ENCODE measurements at regions of chr17 and their contacts with region 1.

Region 1: DNA sequence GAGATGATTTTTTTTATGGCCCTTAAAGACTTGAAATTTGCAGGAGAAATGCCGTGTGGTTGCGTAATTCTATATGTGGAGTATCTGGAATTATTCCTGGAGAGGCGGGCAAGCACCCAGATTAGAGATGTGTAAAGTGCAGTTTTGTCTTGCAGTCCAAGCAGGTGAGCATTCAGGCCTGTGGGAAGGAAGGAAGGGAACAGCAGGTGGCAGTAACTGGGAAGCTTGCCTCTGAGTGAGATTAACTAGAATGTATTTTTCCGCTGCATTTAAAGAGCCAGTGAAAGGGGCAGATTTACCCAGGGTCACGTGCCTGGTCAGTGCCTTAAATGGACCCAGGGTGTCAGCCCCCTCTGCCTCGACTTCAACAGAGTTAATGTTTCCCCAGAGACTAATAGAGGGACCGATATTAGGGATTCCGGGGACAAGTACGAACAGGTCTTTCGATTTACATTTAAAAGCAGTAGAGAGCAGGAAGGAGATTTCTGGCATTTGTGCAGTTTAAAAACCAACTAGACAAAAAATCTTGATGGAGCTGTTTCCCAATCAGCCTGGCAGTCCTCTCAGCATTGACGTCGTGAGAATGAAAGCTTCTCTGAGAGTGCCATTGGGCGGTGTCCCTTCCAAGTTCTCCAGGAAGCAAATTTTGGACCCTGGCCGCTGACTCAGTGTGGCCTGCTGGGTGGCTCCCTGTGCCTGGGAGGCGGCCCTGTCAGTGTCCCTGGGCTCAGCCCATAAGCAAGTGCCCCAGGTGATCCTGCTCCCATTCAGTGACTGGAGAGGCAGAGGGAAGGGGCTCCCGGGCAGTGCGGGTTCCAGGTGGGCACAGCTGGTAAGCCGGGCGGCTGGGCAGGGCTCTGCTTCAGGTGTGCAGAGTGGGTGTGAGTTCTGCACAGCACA is 38.2 kb downstream of the KSR1 start:
- DNase-seq: no peak
- ATAC-seq: no peak; the same call in 2 of the 3 replicates
- H3K4me3 ChIP-seq: no peak overlapping the region
- H3K27ac ChIP-seq: peak overlapping the region; percentile 80; the same call in 1 of the 2 replicates
- H3K4me1 ChIP-seq: peaks cover 43% of the 10 kb centered on the region
- H3K27me3 ChIP-seq: no peaks in the 10 kb centered on the region
- CTCF ChIP-seq: peak in 1 of 3 experiments; percentile 24; a peak in 2 of 6 replicates
- EP300 ChIP-seq: no peak
- POLR2A ChIP-seq: no peak
- RAD21 ChIP-seq: no peak

Region 2: GRCh38 chr17:27466743-27467375 is 27.6 kb before region 1 on chr17:
- CTCF ChIA-PET with region 1: interaction called, 9 read pairs
- POLR2A ChIA-PET with region 1: interaction called, 11 read pairs
- RAD21 ChIA-PET with region 1: interaction called, 20 read pairs
- SMC1A ChIA-PET with region 1: interaction called, 139 read pairs
- in situ Hi-C with region 1: no loop called
- intact Hi-C with region 1: loop called (anchors 2 kb)
- DNase-seq: peak; percentile 87
- ATAC-seq: peak; percentile 79
- H3K4me3 ChIP-seq: peak overlapping the region; percentile 54
- H3K27ac ChIP-seq: peak overlapping the region; percentile 92
- H3K4me1 ChIP-seq: peaks cover 67% of the 10 kb centered on the region
- H3K27me3 ChIP-seq: no peaks in the 10 kb centered on the region
- CTCF ChIP-seq: 0 out of 6 replicates have a peak, but pooled peaks of 1 of the 3 experiments have one; percentile 4
- EP300 ChIP-seq: peak; percentile 26 to 90; a peak in 3 of 4 replicates
- POLR2A ChIP-seq: peak; percentile 47; the same call in 1 of the 2 replicates
- RAD21 ChIP-seq: no peak; the same call in 1 of the 2 replicates

Region 3: GRCh38 chr17:27481327-27481726 is 13.1 kb before region 1 on chr17:
- CTCF ChIA-PET with region 1: interaction called, 4 read pairs
- POLR2A ChIA-PET with region 1: interaction called, 8 read pairs
- RAD21 ChIA-PET with region 1: interaction called, 20 read pairs
- SMC1A ChIA-PET with region 1: interaction called, 139 read pairs
- in situ Hi-C with region 1: no loop called
- intact Hi-C with region 1: no loop called
- DNase-seq: no peak
- ATAC-seq: peak; percentile 64
- H3K4me3 ChIP-seq: no peak overlapping the region
- H3K27ac ChIP-seq: peak overlapping the region; percentile 43
- H3K4me1 ChIP-seq: peaks cover 39% of the 10 kb centered on the region
- H3K27me3 ChIP-seq: no peaks in the 10 kb centered on the region
- CTCF ChIP-seq: no peak
- EP300 ChIP-seq: peak in 1 of 2 experiments; percentile 28; a peak in 1 of 4 replicates
- POLR2A ChIP-seq: peak; percentile 43; the same call in 1 of the 2 replicates
- RAD21 ChIP-seq: no peak

Region 4: GRCh38 chr17:28571255-28572122 is 1077.0 kb after region 1 on chr17 and contains the start of gene PIGS:
- CTCF ChIA-PET with region 1: no interaction called
- POLR2A ChIA-PET with region 1: no interaction called
- RAD21 ChIA-PET with region 1: no interaction called
- SMC1A ChIA-PET with region 1: no interaction called
- in situ Hi-C with region 1: loop called (anchors 25 kb)
- intact Hi-C with region 1: no loop called
- DNase-seq: peak; percentile 68
- ATAC-seq: peak; percentile 97
- H3K4me3 ChIP-seq: peak within 1 kb of the TSS; percentile 90
- H3K27ac ChIP-seq: peak within 1 kb of the TSS; percentile 85
- H3K4me1 ChIP-seq: peaks cover 22% of the 10 kb centered on the region
- H3K27me3 ChIP-seq: no peaks in the 10 kb centered on the region
- CTCF ChIP-seq: no peak
- EP300 ChIP-seq: no peak
- POLR2A ChIP-seq: peak; percentile 94
- RAD21 ChIP-seq: no peak
- polyA plus RNA-seq, gene PIGS: 27.5 to 32.2 TPM